Activated CD8-positive, alpha-beta T cell treated with anti-CD3 and anti-CD28 coated beads for 36 hours (primary cell): ENCODE measurements at regions of chr9 and their contacts with region 1.

Region 1: DNA sequence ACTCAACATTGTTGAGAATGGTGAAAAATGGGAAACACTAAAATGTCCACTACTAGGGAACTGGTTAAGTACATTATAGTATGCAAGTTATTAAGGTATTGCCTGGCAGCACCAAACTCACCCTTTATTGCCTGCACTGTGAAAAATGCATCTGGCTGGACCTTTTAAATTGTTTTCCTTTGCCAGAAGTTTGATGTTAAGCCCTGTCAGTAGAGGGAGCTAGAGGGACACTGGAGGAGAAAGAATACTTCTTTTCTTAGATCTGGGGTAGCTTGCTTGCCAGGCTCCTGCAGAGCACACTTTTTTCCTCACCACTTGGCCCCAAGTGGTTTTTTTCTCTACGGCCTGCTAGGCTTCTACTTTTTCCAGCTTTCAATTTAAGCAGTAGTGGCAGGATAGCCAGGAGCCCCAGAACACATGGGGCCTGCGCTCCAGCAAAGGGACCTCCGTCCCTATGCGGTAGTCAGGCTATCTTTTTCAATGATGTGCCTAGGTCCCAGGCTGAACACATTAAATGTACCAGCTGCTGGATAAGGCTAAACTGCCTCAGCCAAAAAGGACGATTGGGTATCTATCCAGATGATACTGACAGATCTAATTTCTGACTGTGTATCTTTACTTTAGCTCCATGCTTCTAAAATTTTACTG is 8.0 kb upstream of the HABP4 start:
- DNase-seq: no peak
- ATAC-seq: peak; percentile 68
- H3K4me3 Mint-ChIP-seq: no peak overlapping the region
- H3K27ac Mint-ChIP-seq: no peak overlapping the region
- H3K4me1 Mint-ChIP-seq: no peaks in the 10 kb centered on the region
- H3K27me3 Mint-ChIP-seq: no peaks in the 10 kb centered on the region
- CTCF ChIP-seq: peak; percentile 65

Region 2: GRCh38 chr9:95993337-95993736 is 448.6 kb before region 1 on chr9:
- CTCF ChIA-PET with region 1: no interaction called
- POLR2A ChIA-PET with region 1: no interaction called
- intact Hi-C with region 1: no loop called
- DNase-seq: peak; percentile 60
- ATAC-seq: peak; percentile 75
- H3K4me3 Mint-ChIP-seq: no peak overlapping the region
- H3K27ac Mint-ChIP-seq: peak overlapping the region; percentile 79
- H3K4me1 Mint-ChIP-seq: peaks cover 31% of the 10 kb centered on the region
- H3K27me3 Mint-ChIP-seq: no peaks in the 10 kb centered on the region
- CTCF ChIP-seq: no peak

Region 3: GRCh38 chr9:96344458-96345180 is 97.3 kb before region 1 on chr9:
- CTCF ChIA-PET with region 1: no interaction called
- POLR2A ChIA-PET with region 1: no interaction called
- intact Hi-C with region 1: no loop called
- DNase-seq: no peak
- ATAC-seq: no peak
- H3K4me3 Mint-ChIP-seq: no peak overlapping the region
- H3K27ac Mint-ChIP-seq: no peak overlapping the region
- H3K4me1 Mint-ChIP-seq: peaks cover 11% of the 10 kb centered on the region
- H3K27me3 Mint-ChIP-seq: no peaks in the 10 kb centered on the region
- CTCF ChIP-seq: no peak

Region 4: GRCh38 chr9:96398582-96399324 is 43.2 kb before region 1 on chr9:
- CTCF ChIA-PET with region 1: no interaction called
- POLR2A ChIA-PET with region 1: no interaction called
- intact Hi-C with region 1: no loop called
- DNase-seq: no peak
- ATAC-seq: peak; percentile 65
- H3K4me3 Mint-ChIP-seq: no peak overlapping the region
- H3K27ac Mint-ChIP-seq: peak overlapping the region; percentile 82
- H3K4me1 Mint-ChIP-seq: peaks cover 30% of the 10 kb centered on the region
- H3K27me3 Mint-ChIP-seq: no peaks in the 10 kb centered on the region
- CTCF ChIP-seq: no peak

Region 5: DNA sequence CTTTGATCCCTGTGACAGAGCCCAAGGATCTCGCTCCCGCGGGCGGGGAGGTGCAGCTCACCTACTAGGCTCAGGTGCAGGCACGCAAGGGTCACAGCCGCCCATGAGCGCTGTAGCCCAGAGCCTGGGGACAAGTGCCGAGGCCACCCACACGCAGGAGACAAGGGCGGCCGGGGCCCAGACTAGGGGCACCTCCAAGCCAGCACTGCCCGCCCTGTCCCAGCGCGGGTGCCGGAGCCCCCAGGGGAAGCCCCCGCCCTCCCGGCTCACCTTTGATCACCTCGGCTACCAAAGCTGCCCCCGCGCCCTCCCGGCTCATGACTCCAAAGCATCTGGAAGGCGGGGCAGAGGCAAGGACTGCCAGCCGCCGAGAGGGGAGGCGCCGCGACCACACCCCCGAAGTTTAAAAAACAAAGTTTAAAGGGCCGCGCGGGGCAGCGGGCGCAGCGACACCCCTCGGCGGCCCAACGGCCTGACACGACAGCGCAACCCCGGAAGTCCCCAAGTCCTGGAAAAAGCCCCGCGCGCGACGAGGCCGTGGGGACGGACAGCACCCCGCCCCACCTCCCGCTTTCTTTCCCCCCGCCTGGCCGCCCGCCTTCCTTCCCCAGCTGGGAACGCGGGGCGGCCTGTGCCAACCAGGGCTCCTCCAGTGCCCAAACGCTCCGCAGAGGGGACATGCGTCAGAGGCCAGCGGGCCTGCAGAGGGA is 124.7 kb after region 1 on chr9:
- CTCF ChIA-PET with region 1: interaction called, 11 read pairs
- POLR2A ChIA-PET with region 1: no interaction called
- intact Hi-C with region 1: loop called (anchors 10 kb)
- DNase-seq: peak; percentile 84
- ATAC-seq: peak; percentile 88
- H3K4me3 Mint-ChIP-seq: peak overlapping the region; percentile 69
- H3K27ac Mint-ChIP-seq: peak overlapping the region; percentile 1
- H3K4me1 Mint-ChIP-seq: peaks cover 28% of the 10 kb centered on the region
- H3K27me3 Mint-ChIP-seq: peaks cover 4% of the 10 kb centered on the region
- CTCF ChIP-seq: peak; percentile 54

Region 6: GRCh38 chr9:96667361-96667728 is 225.4 kb after region 1 on chr9:
- CTCF ChIA-PET with region 1: interaction called, 22 read pairs
- POLR2A ChIA-PET with region 1: no interaction called
- intact Hi-C with region 1: no loop called
- DNase-seq: no peak
- ATAC-seq: no peak
- H3K4me3 Mint-ChIP-seq: no peak overlapping the region
- H3K27ac Mint-ChIP-seq: no peak overlapping the region
- H3K4me1 Mint-ChIP-seq: no peaks in the 10 kb centered on the region
- H3K27me3 Mint-ChIP-seq: peaks cover 6% of the 10 kb centered on the region
- CTCF ChIP-seq: no peak